ENCODE measurements at regions of chr1 and their contacts with region 1.

Region 1: GRCh38 chr1:225772323-225772768 is 5.3 kb upstream of the SRP9 start:
- DNase-seq: peak; percentile 87 to 90
- ATAC-seq: peak; percentile 93 to 97
- H3K4me3 ChIP-seq: no peak overlapping the region
- H3K27ac ChIP-seq: peak overlapping the region; percentile 83 to 86
- H3K4me1 ChIP-seq: peaks cover 51% of the 10 kb centered on the region
- CTCF ChIP-seq: peak; percentile 95
- EP300 ChIP-seq: no peak
- POLR2A ChIP-seq: no peak
- RAD21 ChIP-seq: peak; percentile 99

Region 2: DNA sequence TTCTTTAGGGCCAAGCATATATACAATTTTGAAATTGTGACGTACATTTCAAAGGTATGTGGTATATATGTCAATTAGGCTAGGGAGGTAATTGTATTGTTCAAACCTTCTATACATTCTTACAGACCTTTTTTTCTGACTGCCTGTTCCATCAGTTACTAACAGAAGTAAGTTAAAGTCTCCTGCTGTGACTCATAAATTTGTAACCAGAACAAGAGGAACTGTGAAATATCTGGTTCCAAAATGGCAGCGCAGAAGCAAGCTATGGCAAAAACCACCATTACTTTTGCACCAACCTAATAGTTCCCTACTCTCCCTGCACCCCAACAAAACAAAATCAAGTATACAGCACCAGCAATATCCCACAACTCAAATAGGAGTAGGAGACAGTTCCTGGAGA is 213.0 kb before region 1 on chr1:
- CTCF ChIA-PET with region 1: interaction called, 86 read pairs
- POLR2A ChIA-PET with region 1: interaction called, 3 read pairs
- DNase-seq: no peak
- ATAC-seq: no peak
- H3K4me3 ChIP-seq: no peak overlapping the region
- H3K27ac ChIP-seq: no peak overlapping the region
- H3K4me1 ChIP-seq: no peaks in the 10 kb centered on the region
- CTCF ChIP-seq: no peak
- EP300 ChIP-seq: no peak
- POLR2A ChIP-seq: no peak
- RAD21 ChIP-seq: no peak

Region 3: GRCh38 chr1:225652729-225653462 is 119.5 kb before region 1 on chr1 and contains the start of gene ENAH:
- CTCF ChIA-PET with region 1: interaction called, 43 read pairs
- POLR2A ChIA-PET with region 1: interaction called, 16 read pairs
- DNase-seq: peak; percentile 65 to 88
- ATAC-seq: peak; percentile 72 to 76
- H3K4me3 ChIP-seq: peak within 1 kb of the TSS; percentile 93
- H3K27ac ChIP-seq: peak within 1 kb of the TSS; percentile 95 to 100
- H3K4me1 ChIP-seq: peaks cover 56% of the 10 kb centered on the region
- CTCF ChIP-seq: no peak
- EP300 ChIP-seq: peak in 1 of 2 experiments; percentile 50; a peak in 1 of 5 replicates
- POLR2A ChIP-seq: peak; percentile 80
- RAD21 ChIP-seq: no peak; a peak in 2 of 5 replicates
- polyA plus RNA-seq, gene ENAH: 124 and 142 TPM in 2 replicates

Region 4: GRCh38 chr1:225710804-225711203 is 61.5 kb before region 1 on chr1:
- CTCF ChIA-PET with region 1: interaction called, 22 read pairs
- POLR2A ChIA-PET with region 1: interaction called, 4 read pairs
- DNase-seq: peak; percentile 81 to 89
- ATAC-seq: peak; percentile 87 to 89
- H3K4me3 ChIP-seq: no peak overlapping the region
- H3K27ac ChIP-seq: peak overlapping the region; percentile 70 to 87
- H3K4me1 ChIP-seq: peaks cover 25% of the 10 kb centered on the region
- CTCF ChIP-seq: no peak
- EP300 ChIP-seq: peak; percentile 37 to 51; a peak in 2 of 5 replicates
- POLR2A ChIP-seq: no peak
- RAD21 ChIP-seq: peak; percentile 22; a peak in 1 of 5 replicates

Region 5: DNA sequence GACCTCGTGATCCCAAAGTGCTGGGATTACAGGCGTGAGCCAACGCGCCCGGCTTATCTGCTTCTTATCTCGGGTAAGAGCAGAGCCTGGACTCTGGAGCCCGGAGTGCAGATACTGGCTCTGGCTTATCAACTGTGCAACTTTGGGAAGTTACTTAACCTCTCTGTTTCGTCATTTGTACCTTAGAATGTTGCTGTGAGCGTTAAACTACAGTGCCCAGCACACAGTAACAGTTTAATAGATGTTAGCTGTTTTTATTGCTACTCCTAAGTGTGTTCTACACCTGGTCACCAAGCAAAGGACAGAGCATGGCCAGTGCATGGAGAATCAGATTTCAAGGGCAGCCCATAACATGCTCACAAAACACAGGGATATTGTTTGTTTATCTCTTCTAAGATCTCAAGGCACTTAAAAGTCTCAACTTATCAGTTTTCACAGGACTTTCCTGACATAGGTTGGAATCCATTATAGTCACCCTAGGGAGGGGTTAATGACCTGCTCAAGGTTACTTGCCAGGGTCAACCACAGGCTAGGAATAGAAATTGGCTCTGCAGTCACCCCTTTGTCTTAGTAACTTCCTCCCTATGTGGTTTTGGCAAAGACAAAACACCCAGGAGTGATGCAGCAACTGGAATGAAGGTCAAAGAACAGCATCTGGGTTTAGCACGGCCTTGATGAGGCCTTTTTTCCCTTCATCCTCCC is 17.3 kb before region 1 on chr1:
- CTCF ChIA-PET with region 1: interaction called, 43 read pairs
- POLR2A ChIA-PET with region 1: no interaction called
- DNase-seq: no peak
- ATAC-seq: peak; percentile 55 to 59; a peak in 5 of 6 replicates
- H3K4me3 ChIP-seq: no peak overlapping the region
- H3K27ac ChIP-seq: peak overlapping the region; percentile 31 to 64; a peak in 5 of 6 replicates
- H3K4me1 ChIP-seq: peaks cover 19% of the 10 kb centered on the region
- CTCF ChIP-seq: no peak
- EP300 ChIP-seq: no peak
- POLR2A ChIP-seq: no peak
- RAD21 ChIP-seq: no peak

Region 6: GRCh38 chr1:225937048-225937968 is 165.0 kb after region 1 on chr1:
- CTCF ChIA-PET with region 1: no interaction called
- POLR2A ChIA-PET with region 1: no interaction called
- DNase-seq: no peak
- ATAC-seq: no peak
- H3K4me3 ChIP-seq: no peak overlapping the region
- H3K27ac ChIP-seq: no peak overlapping the region
- H3K4me1 ChIP-seq: 0 out of 3 replicates have a peak, but pooled peaks cover 3% of the 10 kb centered on the region
- CTCF ChIP-seq: no peak
- EP300 ChIP-seq: no peak
- POLR2A ChIP-seq: no peak
- RAD21 ChIP-seq: no peak

Region 7: DNA sequence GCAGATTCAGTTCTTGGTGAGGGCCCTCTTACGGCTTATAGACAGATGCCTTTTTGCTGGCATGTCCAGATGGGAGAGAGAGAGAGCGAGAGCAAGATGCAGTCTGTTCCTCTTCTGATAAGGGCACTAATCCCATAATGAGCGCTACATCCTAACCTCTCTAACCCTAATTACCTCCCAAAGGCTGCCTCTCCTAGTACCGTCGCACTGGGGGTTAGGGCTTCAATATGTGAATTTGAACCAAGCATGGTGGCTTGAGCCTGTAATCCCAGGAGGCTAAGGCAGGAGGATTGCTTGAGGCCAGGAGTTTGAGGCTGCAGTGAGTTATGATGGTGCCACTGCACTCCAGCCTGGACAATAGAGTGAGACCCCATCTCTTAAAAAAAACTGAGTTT is 237.3 kb after region 1 on chr1:
- CTCF ChIA-PET with region 1: no interaction called
- POLR2A ChIA-PET with region 1: no interaction called
- DNase-seq: no peak
- ATAC-seq: no peak
- H3K4me3 ChIP-seq: no peak overlapping the region
- H3K27ac ChIP-seq: no peak overlapping the region
- H3K4me1 ChIP-seq: no peaks in the 10 kb centered on the region
- CTCF ChIP-seq: no peak
- EP300 ChIP-seq: no peak
- POLR2A ChIP-seq: no peak
- RAD21 ChIP-seq: no peak

Region 8: GRCh38 chr1:226444901-226445300 is 672.6 kb after region 1 on chr1:
- CTCF ChIA-PET with region 1: no interaction called
- POLR2A ChIA-PET with region 1: no interaction called
- DNase-seq: no peak
- ATAC-seq: peak in 1 of 2 experiments; percentile 53; a peak in 3 of 6 replicates
- H3K4me3 ChIP-seq: no peak overlapping the region
- H3K27ac ChIP-seq: no peak overlapping the region
- H3K4me1 ChIP-seq: no peaks in the 10 kb centered on the region
- CTCF ChIP-seq: no peak
- EP300 ChIP-seq: no peak
- POLR2A ChIP-seq: no peak
- RAD21 ChIP-seq: no peak

Region 9: DNA sequence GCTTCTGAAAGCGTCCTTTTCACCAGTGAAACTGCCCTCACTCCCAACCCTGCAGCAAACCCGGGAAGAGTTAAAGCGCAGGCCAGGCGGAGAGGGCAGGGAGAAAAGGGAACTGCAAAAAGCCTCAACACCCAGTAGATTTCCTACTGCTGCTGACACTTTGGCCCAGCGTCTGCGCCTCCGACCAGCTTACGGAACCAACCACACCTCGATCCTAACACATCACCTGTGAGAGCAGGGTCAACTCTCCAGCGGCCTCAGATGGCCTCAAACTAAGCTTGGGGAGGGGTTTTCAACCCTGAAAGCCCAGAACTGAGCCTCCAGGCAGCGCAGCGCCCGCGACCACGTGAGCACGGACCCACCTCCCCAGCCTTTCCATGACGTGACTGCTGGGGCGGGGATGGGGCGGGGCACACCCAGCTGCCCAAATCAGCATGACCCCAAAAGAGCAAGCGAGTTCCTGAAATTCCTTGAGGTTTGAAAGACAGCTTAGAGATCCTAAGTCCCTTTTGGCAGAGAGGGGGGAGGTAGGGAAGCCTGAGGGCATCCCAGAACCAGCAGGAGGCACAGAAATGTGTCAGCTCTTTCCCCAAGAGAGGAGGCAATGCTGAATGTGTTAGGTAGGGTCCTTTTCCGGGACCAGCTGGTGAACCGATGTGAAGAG is 907.6 kb after region 1 on chr1:
- CTCF ChIA-PET with region 1: no interaction called
- POLR2A ChIA-PET with region 1: no interaction called
- DNase-seq: no peak
- ATAC-seq: no peak
- H3K4me3 ChIP-seq: no peak overlapping the region
- H3K27ac ChIP-seq: no peak overlapping the region
- H3K4me1 ChIP-seq: peaks cover 11% of the 10 kb centered on the region; the same call in 2 of the 3 replicates
- CTCF ChIP-seq: no peak
- EP300 ChIP-seq: no peak
- POLR2A ChIP-seq: no peak
- RAD21 ChIP-seq: no peak

Measured in A549 (cell line).